Ovary (tissue), 10 donors: ENCODE measurements at regions of chr1 and their contacts with region 1.

Region 1: GRCh38 chr1:36689992-36690391 is 207.3 kb upstream of the CSF3R start:
- DNase-seq: no peak
- H3K4me3 ChIP-seq: no peak overlapping the region
- H3K27ac ChIP-seq: no peak overlapping the region
- H3K4me1 ChIP-seq: no peaks in the 10 kb centered on the region
- H3K27me3 ChIP-seq: no peaks in the 10 kb centered on the region
- CTCF ChIP-seq: no peak
- EP300 ChIP-seq: no peak
- POLR2A ChIP-seq: no peak

Region 2: GRCh38 chr1:37958690-37959089 is 1268.7 kb after region 1 on chr1:
- intact Hi-C with region 1: loop called in 1 of 4 experiments (anchors 5 kb)
- DNase-seq: no peak
- H3K4me3 ChIP-seq: no peak overlapping the region
- H3K27ac ChIP-seq: no peak overlapping the region
- H3K4me1 ChIP-seq: no peaks in the 10 kb centered on the region
- H3K27me3 ChIP-seq: no peaks in the 10 kb centered on the region
- CTCF ChIP-seq: no peak
- EP300 ChIP-seq: no peak
- POLR2A ChIP-seq: no peak